ENCODE measurements at regions of chr11 and their contacts with region 1.

Region 1: DNA sequence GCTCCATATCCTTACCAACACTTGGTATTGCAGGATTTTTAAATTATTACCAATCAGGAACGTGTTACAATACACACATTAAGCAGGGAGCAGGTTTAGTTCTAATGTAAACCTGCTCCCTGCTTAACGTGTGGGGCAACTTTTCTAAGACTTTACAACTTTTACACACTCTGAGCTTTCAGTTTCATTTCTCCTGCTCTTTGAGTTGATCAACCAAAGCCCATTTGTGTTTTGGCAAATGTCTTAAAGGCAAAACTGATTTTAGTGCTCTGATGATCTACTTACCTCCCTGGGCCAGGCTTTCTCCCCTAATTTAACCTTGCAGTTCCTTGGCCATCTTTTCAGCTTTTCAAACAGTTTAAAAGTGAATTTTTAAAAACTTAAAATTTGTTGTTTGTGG is 70.9 kb downstream of the ZBTB44 start:
- DNase-seq: peak; percentile 20
- ATAC-seq: no peak
- H3K4me3 ChIP-seq: no peak overlapping the region
- H3K4me3 Mint-ChIP-seq: no peak overlapping the region
- H3K27ac ChIP-seq: peak overlapping the region in 1 of 2 donors; percentile 37
- H3K27ac Mint-ChIP-seq: peak overlapping the region; percentile 13
- H3K4me1 ChIP-seq: peaks cover 10 to 11% of the 10 kb centered on the region in 2 donors
- H3K4me1 Mint-ChIP-seq: peaks cover 18% of the 10 kb centered on the region
- H3K27me3 ChIP-seq: no peaks in the 10 kb centered on the region
- H3K27me3 Mint-ChIP-seq: no peaks in the 10 kb centered on the region
- CTCF ChIP-seq: no peak

Region 2: GRCh38 chr11:130308886-130309285 is 65.1 kb after region 1 on chr11:
- CTCF ChIA-PET with region 1: no interaction called
- POLR2A ChIA-PET with region 1: no interaction called
- intact Hi-C with region 1: loop called (anchors 1 kb)
- DNase-seq: no peak
- ATAC-seq: no peak
- H3K4me3 ChIP-seq: no peak overlapping the region
- H3K4me3 Mint-ChIP-seq: no peak overlapping the region
- H3K27ac ChIP-seq: no peak overlapping the region
- H3K27ac Mint-ChIP-seq: no peak overlapping the region
- H3K4me1 ChIP-seq: peaks cover 3 to 14% of the 10 kb centered on the region in 2 donors
- H3K4me1 Mint-ChIP-seq: peaks cover 62% of the 10 kb centered on the region
- H3K27me3 ChIP-seq: no peaks in the 10 kb centered on the region
- H3K27me3 Mint-ChIP-seq: no peaks in the 10 kb centered on the region
- CTCF ChIP-seq: no peak